OCI-LY7 (cell line): ENCODE measurements at regions of chr15 and their contacts with region 1.

Region 1: DNA sequence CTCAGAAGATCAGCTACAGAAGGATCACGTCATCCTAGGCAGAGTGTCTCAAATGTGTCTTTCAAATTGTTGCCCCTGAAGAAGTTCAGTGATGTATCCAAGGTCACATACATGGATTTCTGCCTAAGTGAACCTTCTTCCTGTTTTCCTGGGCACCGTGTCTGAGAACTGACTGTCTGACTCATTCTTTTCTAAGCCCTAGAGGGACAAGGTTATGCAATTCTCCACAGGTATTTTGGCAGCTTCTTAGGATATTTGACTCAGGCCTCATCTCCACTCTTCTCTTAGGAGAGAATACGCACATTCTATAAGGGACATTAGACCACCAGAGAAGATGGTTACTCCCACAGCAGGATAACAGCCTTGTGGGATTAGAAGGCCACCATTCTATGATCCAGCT is 392.0 kb upstream of the THBS1 start:
- DNase-seq: no peak
- H3K4me3 ChIP-seq: no peak overlapping the region
- H3K27ac ChIP-seq: no peak overlapping the region
- H3K4me1 ChIP-seq: no peaks in the 10 kb centered on the region
- CTCF ChIP-seq: no peak

Region 2: GRCh38 chr15:39125904-39126303 is 63.0 kb before region 1 on chr15:
- CTCF ChIA-PET with region 1: no interaction called
- POLR2A ChIA-PET with region 1: no interaction called
- intact Hi-C with region 1: loop called (anchors 10 kb)
- DNase-seq: peak; percentile 31
- H3K4me3 ChIP-seq: no peak overlapping the region
- H3K27ac ChIP-seq: no peak overlapping the region
- H3K4me1 ChIP-seq: no peaks in the 10 kb centered on the region
- CTCF ChIP-seq: peak; percentile 77

Region 3: GRCh38 chr15:39381517-39381916 is 192.6 kb after region 1 on chr15:
- CTCF ChIA-PET with region 1: no interaction called
- POLR2A ChIA-PET with region 1: no interaction called
- intact Hi-C with region 1: no loop called
- DNase-seq: no peak
- H3K4me3 ChIP-seq: no peak overlapping the region
- H3K27ac ChIP-seq: no peak overlapping the region
- H3K4me1 ChIP-seq: no peaks in the 10 kb centered on the region
- CTCF ChIP-seq: no peak